GM13976 (cell line): ENCODE measurements at regions of chr20 and their contacts with region 1.

Region 1: GRCh38 chr20:47272893-47273590 is 83.5 kb downstream of the ZMYND8 start:
- DNase-seq: peak; percentile 70
- CTCF ChIP-seq: peak; percentile 84

Region 2: DNA sequence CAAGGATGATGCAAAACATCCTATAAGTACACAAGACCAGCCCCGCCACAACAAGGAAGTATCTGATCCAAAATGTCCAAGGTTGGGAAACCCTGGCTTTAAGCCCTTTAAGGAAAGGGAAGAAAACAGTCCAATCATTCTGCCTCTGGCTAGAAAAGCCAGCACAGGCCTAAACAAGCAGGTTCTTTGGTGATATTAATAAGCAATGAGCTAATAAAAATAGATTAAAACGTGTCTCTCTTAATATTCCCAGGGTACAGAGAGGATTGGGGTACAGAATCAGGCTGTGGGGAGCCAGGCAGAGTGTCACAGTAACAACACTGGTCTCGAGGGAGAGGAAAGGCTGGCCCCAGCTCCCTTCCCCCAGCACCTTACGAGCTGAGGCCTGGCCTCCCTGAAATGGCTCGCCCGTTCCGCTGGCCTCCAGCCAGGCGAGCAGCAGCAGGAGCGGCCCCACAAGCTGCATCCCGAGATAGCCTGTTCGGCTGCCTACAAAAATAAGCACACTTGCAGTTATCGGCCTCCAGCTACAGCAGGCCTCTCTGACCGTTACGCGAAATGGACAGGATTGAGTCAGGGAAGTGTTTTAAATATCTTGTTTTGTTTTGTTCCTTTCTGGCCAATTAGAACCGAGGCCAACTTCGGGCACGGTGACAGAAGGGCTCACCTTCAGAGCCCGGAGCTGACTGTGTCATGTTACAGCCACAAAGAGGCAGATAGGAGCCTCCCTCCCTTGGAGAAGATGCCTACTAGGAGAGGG is 87.4 kb after region 1 on chr20:
- in situ Hi-C with region 1: loop called (anchors 10 kb)
- DNase-seq: peak; percentile 72
- CTCF ChIP-seq: no peak

Region 3: DNA sequence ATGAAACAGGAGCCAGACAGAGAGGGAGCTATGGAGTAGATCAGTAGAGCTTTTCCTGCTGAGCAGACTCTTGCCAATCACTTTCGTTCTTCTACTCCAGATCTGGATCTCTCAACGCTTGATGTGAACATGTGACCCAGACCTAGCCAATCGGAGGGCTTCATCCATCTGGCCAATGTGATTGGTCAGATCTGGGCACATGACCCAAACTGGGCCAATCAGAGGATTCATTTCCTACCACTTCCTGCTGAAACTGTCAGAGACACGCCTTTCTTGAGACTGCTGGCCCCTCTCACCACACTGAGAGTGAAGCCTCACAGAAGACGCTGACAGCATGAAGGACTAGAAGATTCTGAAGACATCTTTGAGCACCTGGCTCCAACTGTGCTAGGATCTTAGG is 127.6 kb after region 1 on chr20:
- in situ Hi-C with region 1: no loop called
- DNase-seq: no peak
- CTCF ChIP-seq: no peak